T-cell (primary cell): ENCODE measurements at regions of chrX and their contacts with region 1.

Region 1: DNA sequence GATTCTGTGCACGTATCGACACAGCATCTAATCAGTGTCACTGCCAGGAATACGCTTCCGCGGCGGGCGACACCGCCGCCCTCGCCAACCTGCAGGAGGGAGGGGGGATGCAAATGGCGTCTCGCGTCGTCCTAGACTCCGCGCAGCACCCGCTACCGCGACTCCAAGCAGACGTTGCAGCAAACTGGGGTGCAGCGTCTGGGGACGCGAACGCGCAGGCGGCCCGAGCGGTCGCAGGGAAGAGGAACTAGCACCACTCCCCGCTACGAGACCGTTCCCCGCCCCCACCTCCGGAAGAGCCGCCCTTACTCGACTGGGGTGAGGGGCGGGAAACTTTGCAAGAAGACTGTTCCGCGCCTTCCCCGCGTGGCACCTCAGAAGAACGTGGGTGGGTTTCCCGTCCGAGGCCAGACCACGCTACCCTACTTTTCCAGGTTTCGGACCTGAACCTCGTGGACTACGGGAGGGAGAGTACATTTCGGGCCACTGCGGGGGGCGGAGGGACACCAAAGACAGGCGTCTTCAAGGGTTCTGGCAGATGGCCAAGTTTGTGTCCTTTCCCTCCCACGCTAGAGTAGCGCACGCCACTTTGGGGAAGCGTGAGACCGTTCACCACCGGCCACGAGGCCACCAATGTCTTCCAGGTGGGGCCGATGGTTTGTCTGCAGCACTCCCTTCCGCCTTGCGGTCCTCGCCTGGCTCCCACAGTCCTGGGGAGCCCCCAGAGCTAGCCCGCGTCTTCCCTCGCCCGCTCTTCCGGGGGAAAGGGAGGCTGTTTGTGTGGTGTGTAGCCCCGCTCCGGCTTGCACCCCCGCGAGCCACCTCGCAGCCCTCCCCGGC is 78.0 kb upstream of the BCOR start:
- DNase-seq: peak; percentile 65 to 85 (median 75)
- ATAC-seq: peak; percentile 48 to 60 (median 52)
- H3K4me3 ChIP-seq: peak overlapping the region; percentile 46 to 78
- H3K4me3 Mint-ChIP-seq: peak overlapping the region; percentile 86 to 89 (median 86)
- H3K27ac ChIP-seq: peak overlapping the region; percentile 98
- H3K27ac Mint-ChIP-seq: peak overlapping the region; percentile 95 to 99
- H3K4me1 ChIP-seq: peaks cover 5 to 55% of the 10 kb centered on the region in 2 experiments
- H3K4me1 Mint-ChIP-seq: peaks cover 37 to 40% (median 37%) of the 10 kb centered on the region in 3 donors
- H3K27me3 ChIP-seq: no peaks in the 10 kb centered on the region
- H3K27me3 Mint-ChIP-seq: peaks cover 0 to 11% of the 10 kb centered on the region in 2 donors

Region 2: DNA sequence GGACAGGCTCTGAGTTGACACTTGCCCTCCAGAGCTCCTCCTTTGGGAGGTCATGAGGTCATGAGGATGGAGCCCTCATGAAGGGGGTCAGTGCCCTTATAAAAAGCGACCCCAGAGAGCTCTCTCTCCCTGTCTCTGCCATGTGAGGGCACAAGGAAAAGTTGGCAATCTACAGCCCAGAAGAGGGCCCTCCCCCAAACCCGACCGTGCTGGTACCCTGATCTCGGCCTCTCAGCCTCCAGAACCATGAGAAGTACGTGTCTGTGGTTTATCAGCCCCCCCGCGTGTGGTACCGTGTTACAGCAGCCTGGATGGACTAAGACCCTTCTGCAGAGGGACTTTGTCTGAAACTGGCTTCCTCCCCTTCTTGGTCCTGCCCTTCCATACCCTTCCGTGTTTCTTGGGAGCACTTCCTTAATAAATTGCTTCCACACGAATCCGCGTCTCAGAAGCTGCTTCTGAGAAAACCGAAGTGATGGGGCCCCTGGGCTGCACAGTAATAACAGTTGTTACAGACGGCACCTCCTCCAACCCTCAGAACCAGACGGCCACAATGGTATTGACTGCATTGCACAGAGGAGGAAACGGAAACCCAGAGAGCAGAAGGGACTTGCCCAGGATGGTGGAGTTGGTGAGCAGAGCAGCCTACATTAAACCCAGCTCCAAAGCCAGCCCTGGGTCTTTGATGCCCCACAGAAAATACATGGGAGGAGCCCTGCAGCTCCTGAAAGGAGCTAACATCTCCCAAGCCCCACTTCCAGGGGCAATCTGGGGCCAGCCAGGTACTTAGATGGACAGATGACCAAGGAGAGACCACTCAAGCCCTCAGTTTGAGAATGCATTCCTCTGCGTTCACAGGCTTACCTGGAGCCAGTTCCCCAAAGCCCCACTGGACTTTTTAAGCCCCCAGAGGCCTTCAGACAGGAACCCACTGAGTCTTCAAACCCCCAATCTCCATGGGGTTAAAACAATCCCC is 320.7 kb before region 1 on chrX:
- CTCF ChIA-PET with region 1: no interaction called
- POLR2A ChIA-PET with region 1: interaction called in 1 of 2 experiments, 17 read pairs
- DNase-seq: peak; percentile 33 to 89 (median 72)
- ATAC-seq: peak; percentile 91 to 94 (median 93)
- H3K4me3 ChIP-seq: peak overlapping the region in 1 of 2 donors; percentile 50
- H3K4me3 Mint-ChIP-seq: peak overlapping the region; percentile 67 to 76 (median 69)
- H3K27ac ChIP-seq: peak overlapping the region; percentile 100
- H3K27ac Mint-ChIP-seq: peak overlapping the region; percentile 90 to 93
- H3K4me1 ChIP-seq: peaks cover 10 to 75% of the 10 kb centered on the region in 2 experiments
- H3K4me1 Mint-ChIP-seq: peaks cover 55 to 72% (median 61%) of the 10 kb centered on the region in 3 donors
- H3K27me3 ChIP-seq: no peaks in the 10 kb centered on the region
- H3K27me3 Mint-ChIP-seq: peaks cover 0 to 1% of the 10 kb centered on the region in 2 donors

Region 3: GRCh38 chrX:40008791-40009461 is 166.8 kb before region 1 on chrX:
- CTCF ChIA-PET with region 1: no interaction called
- POLR2A ChIA-PET with region 1: interaction called in 1 of 2 experiments, 15 read pairs
- DNase-seq: peak in 2 of 35 experiments; percentile 8 to 33
- ATAC-seq: no peak
- H3K4me3 ChIP-seq: peak overlapping the region; percentile 21 to 46
- H3K4me3 Mint-ChIP-seq: peak overlapping the region; percentile 43 to 67 (median 49)
- H3K27ac ChIP-seq: no peak overlapping the region
- H3K27ac Mint-ChIP-seq: no peak overlapping the region
- H3K4me1 ChIP-seq: peaks cover 10 to 73% of the 10 kb centered on the region in 2 experiments
- H3K4me1 Mint-ChIP-seq: peaks cover 30 to 39% (median 38%) of the 10 kb centered on the region in 3 donors
- H3K27me3 ChIP-seq: peaks cover 3 to 78% of the 10 kb centered on the region in 2 experiments
- H3K27me3 Mint-ChIP-seq: peaks cover 39 to 47% of the 10 kb centered on the region in 2 donors

Region 4: GRCh38 chrX:40108959-40109287 is 66.8 kb before region 1 on chrX:
- CTCF ChIA-PET with region 1: no interaction called
- POLR2A ChIA-PET with region 1: interaction called in 1 of 2 experiments, 11 read pairs
- DNase-seq: peak in 25 of 35 experiments; percentile 25 to 80 (median 49)
- ATAC-seq: peak; percentile 55 to 64 (median 60)
- H3K4me3 ChIP-seq: peak overlapping the region; percentile 33 to 50
- H3K4me3 Mint-ChIP-seq: peak overlapping the region in 2 of 3 donors; percentile 59 to 84
- H3K27ac ChIP-seq: no peak overlapping the region
- H3K27ac Mint-ChIP-seq: no peak overlapping the region
- H3K4me1 ChIP-seq: peaks cover 7 to 32% of the 10 kb centered on the region in 2 experiments
- H3K4me1 Mint-ChIP-seq: peaks cover 10 to 21% (median 15%) of the 10 kb centered on the region in 3 donors
- H3K27me3 ChIP-seq: peaks cover 0 to 1% of the 10 kb centered on the region in 2 experiments
- H3K27me3 Mint-ChIP-seq: peaks cover 0 to 18% of the 10 kb centered on the region in 2 donors

Region 5: GRCh38 chrX:40201329-40201885 is 25.7 kb after region 1 on chrX:
- CTCF ChIA-PET with region 1: no interaction called
- POLR2A ChIA-PET with region 1: interaction called in 1 of 2 experiments, 10 read pairs
- DNase-seq: peak in 24 of 35 experiments; percentile 2 to 55 (median 23)
- ATAC-seq: peak in 3 of 4 experiments; percentile 69 to 81 (median 72)
- H3K4me3 ChIP-seq: no peak overlapping the region
- H3K4me3 Mint-ChIP-seq: no peak overlapping the region
- H3K27ac ChIP-seq: peak overlapping the region; percentile 39
- H3K27ac Mint-ChIP-seq: peak overlapping the region; percentile 49 to 64
- H3K4me1 ChIP-seq: peaks cover 0 to 23% of the 10 kb centered on the region in 2 experiments
- H3K4me1 Mint-ChIP-seq: peaks cover 7 to 17% (median 13%) of the 10 kb centered on the region in 3 donors
- H3K27me3 ChIP-seq: no peaks in the 10 kb centered on the region
- H3K27me3 Mint-ChIP-seq: no peaks in the 10 kb centered on the region